ENCODE measurements at regions of chr11 and their contacts with region 1.

Region 1: DNA sequence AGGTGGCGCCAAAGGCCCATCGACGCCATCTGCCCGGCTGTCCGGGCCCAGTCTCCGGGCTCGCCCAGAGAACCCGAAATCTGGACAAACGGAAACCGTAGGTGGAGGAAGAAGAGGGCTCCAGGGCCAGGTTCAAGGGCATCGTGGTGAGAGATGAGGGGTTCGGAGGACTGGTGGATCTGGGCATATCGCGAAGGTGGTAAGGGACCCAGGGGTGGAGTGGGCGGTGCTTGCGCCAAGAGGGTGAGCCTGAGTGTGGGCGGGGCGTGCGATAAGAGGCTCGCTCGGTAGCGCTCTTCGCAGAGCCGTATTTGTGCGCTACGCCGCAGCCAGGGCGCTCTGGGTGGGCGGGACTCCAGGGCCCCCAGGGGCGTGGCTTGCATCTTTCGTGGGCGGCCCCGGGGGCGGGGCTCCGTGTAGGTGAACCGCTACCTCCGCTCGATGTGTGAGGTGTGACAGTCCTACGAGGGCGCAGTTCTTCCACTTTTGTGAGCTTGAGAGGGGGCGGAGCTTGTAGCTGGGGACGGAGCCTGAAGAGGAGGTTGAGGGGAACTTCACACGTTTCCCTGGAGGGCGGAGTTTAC is 4.8 kb downstream of the CD248 start:
- DNase-seq: peak; percentile 98
- ATAC-seq: peak; percentile 79
- H3K4me3 Mint-ChIP-seq: peak overlapping the region; percentile 93
- H3K27ac Mint-ChIP-seq: peak overlapping the region; percentile 97
- H3K4me1 Mint-ChIP-seq: peaks cover 30% of the 10 kb centered on the region
- H3K27me3 Mint-ChIP-seq: no peaks in the 10 kb centered on the region
- CTCF ChIP-seq: peak; percentile 95

Region 2: DNA sequence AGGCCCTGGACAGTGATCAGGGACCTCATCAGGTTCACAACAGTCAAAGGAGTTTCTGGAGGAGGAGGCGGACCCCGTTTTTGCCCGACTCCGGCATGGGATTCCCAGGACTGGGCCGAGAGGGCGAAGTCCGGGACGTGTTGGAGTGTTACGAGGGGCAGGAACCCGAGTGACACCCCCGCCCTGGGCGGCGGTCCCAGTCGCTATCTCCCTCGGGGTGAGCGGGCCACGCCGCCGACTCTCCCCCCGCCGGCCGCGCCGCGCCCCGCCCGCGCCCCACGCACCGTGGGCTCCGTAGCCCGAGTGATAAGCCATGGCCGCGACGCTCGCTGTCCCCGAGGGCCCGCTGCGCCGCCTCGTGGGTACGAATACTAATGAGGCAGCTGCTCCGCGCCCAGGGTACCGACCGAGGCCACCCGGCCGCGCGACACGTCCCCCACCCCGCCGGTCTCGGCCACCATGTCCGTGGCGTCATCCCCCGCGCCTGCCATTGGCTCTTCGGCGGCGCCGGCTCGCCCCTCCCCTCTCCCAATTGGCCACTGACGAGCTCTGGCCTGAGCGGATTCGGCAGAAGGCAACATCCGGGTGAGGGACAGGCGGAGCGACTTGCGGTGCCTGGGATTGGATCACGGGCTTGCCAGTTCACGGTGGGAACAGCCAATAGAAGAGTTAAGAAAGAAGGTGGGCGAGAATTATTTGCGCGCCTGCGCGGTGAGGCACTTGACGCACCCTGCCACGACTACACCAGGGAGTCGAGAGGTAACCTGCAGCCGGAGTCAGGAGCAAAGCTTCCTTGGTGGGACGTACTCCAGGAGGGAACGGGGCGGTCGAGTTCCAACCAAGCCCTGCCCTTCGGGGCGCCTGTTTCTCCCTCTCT is 23.1 kb before region 1 on chr11 and contains the start of gene YIF1A:
- CTCF ChIA-PET with region 1: interaction called, 10 read pairs
- POLR2A ChIA-PET with region 1: interaction called, 26 read pairs
- intact Hi-C with region 1: loop called (anchors 1 kb)
- DNase-seq: peak; percentile 93
- ATAC-seq: peak; percentile 95
- H3K4me3 Mint-ChIP-seq: peak within 1 kb of the TSS; percentile 89
- H3K27ac Mint-ChIP-seq: peak within 1 kb of the TSS; percentile 90
- H3K4me1 Mint-ChIP-seq: peaks cover 31% of the 10 kb centered on the region
- H3K27me3 Mint-ChIP-seq: peaks cover 17% of the 10 kb centered on the region
- CTCF ChIP-seq: no peak
- total RNA-seq, gene YIF1A: 53.4 and 62.6 TPM in 2 replicates

Region 3: GRCh38 chr11:66336234-66337102 is 24.4 kb after region 1 on chr11 and contains the start of gene RIN1:
- CTCF ChIA-PET with region 1: interaction called, 67 read pairs
- POLR2A ChIA-PET with region 1: interaction called, 9 read pairs
- intact Hi-C with region 1: no loop called
- DNase-seq: no peak
- ATAC-seq: peak; percentile 78
- H3K4me3 Mint-ChIP-seq: peak within 1 kb of the TSS; percentile 78
- H3K27ac Mint-ChIP-seq: peak within 1 kb of the TSS; percentile 50
- H3K4me1 Mint-ChIP-seq: peaks cover 22% of the 10 kb centered on the region
- H3K27me3 Mint-ChIP-seq: peaks cover 6% of the 10 kb centered on the region
- CTCF ChIP-seq: no peak
- total RNA-seq, gene RIN1: 0.76 and 0.98 TPM in 2 replicates

Region 4: GRCh38 chr11:66371627-66372415 is 59.8 kb after region 1 on chr11 and contains the start of gene SLC29A2:
- CTCF ChIA-PET with region 1: no interaction called
- POLR2A ChIA-PET with region 1: interaction called, 24 read pairs
- intact Hi-C with region 1: loop called (anchors 1 kb)
- DNase-seq: peak; percentile 78
- ATAC-seq: peak; percentile 87
- H3K4me3 Mint-ChIP-seq: peak within 1 kb of the TSS; percentile 90
- H3K27ac Mint-ChIP-seq: peak within 1 kb of the TSS; percentile 94
- H3K4me1 Mint-ChIP-seq: peaks cover 15% of the 10 kb centered on the region
- H3K27me3 Mint-ChIP-seq: no peaks in the 10 kb centered on the region
- CTCF ChIP-seq: no peak
- total RNA-seq, gene SLC29A2: 13.5 and 17.1 TPM in 2 replicates

Region 5: GRCh38 chr11:66438504-66439466 is 126.7 kb after region 1 on chr11 and contains the start of gene MRPL11:
- CTCF ChIA-PET with region 1: interaction called, 13 read pairs
- POLR2A ChIA-PET with region 1: interaction called, 3 read pairs
- intact Hi-C with region 1: loop called (anchors 1 kb)
- DNase-seq: peak; percentile 78
- ATAC-seq: peak; percentile 98
- H3K4me3 Mint-ChIP-seq: peak within 1 kb of the TSS; percentile 87
- H3K27ac Mint-ChIP-seq: peak within 1 kb of the TSS; percentile 97
- H3K4me1 Mint-ChIP-seq: peaks cover 8% of the 10 kb centered on the region
- H3K27me3 Mint-ChIP-seq: peaks cover 4% of the 10 kb centered on the region
- CTCF ChIP-seq: no peak
- total RNA-seq, gene MRPL11: 62.6 and 74.3 TPM in 2 replicates

Region 6: DNA sequence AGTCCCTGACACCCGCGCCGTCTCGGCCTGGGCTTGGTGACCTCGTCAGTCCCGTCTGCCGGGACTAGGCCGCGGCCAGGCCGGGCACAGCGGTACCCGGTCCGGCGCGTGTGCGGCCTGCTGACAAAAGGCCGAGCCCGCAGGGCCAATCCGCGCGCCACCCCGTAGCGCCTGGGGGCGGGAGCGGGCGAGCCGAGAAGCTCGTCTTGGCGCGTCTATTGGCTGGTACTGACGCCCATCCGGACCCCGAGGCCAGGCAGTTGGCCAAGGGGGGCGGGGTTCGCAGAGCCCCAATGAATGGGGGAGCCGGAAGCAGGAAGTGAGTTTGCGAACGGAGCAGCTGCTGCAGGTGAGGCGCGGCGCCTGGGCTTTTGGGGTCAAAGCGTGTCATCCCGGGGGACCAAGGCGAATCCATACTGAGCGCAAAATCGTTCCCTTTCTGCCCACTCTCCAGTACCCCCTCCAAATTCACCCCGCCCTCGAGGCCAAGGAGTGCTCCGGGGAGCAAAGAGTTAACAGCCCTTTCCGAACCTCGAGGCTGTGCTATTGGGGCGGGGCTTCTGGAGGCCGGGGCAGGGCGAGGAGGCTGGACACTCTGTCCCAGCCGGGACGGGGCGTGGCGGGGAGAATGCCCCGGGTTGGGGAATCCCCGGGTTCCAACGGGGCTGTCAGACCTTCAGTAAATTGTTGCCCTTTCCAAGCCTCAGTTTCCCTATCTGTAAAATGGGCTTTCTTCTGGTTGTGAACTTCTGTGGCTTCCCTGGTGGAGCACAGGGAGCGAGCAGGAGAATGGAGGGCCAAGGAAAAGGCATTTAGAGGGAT is 168.3 kb after region 1 on chr11 and contains the start of gene DPP3:
- CTCF ChIA-PET with region 1: interaction called, 7 read pairs
- POLR2A ChIA-PET with region 1: interaction called, 6 read pairs
- intact Hi-C with region 1: loop called (anchors 1 kb)
- DNase-seq: peak; percentile 91
- ATAC-seq: peak; percentile 98
- H3K4me3 Mint-ChIP-seq: peak within 1 kb of the TSS; percentile 90
- H3K27ac Mint-ChIP-seq: peak within 1 kb of the TSS; percentile 87
- H3K4me1 Mint-ChIP-seq: peaks cover 22% of the 10 kb centered on the region
- H3K27me3 Mint-ChIP-seq: no peaks in the 10 kb centered on the region
- CTCF ChIP-seq: no peak
- total RNA-seq, gene DPP3: 62.2 and 63.3 TPM in 2 replicates

Region 7: DNA sequence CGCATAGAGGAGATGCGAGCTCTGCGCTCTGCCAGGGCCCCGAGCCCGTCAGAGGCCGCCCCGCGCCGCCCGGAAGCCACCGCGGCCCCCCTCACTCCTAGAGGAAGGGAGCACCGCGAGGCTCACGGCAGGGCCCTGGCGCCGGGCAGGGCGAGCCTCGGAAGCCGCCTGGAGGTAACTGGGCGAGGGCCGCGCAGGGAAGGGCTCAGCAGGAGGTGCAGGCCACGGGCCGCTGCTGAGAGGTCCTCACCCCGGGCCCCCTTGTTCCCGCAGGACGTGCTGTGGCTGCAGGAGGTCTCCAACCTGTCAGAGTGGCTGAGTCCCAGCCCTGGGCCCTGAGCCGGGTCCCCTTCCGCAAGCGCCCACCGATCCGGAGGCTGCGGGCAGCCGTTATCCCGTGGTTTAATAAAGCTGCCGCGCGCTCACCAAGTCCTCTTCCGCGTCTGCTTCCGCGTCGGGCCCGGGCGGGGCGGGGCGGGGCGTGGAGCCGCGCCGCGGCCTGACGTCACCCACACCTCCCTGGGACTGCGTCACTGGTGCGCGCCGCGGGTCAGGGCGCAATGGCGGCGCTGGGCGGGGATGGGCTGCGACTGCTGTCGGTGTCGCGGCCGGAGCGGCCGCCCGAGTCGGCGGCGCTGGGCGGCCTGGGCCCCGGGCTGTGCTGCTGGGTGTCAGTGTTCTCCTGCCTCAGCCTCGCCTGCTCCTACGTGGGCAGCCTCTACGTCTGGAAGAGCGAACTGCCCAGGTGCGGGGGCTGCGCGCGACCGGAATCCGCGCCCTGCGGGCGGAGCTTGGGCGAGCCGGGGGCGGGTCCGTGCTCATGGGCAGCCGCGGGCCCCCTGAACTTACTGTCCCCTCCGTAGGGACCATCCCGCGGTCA is 531.1 kb after region 1 on chr11 and contains the start of gene RCE1:
- CTCF ChIA-PET with region 1: no interaction called
- POLR2A ChIA-PET with region 1: interaction called, 7 read pairs
- intact Hi-C with region 1: loop called (anchors 1 kb)
- DNase-seq: peak; percentile 93
- ATAC-seq: peak; percentile 91
- H3K4me3 Mint-ChIP-seq: peak within 1 kb of the TSS; percentile 92
- H3K27ac Mint-ChIP-seq: peak within 1 kb of the TSS; percentile 90
- H3K4me1 Mint-ChIP-seq: peaks cover 45% of the 10 kb centered on the region
- H3K27me3 Mint-ChIP-seq: no peaks in the 10 kb centered on the region
- CTCF ChIP-seq: no peak
- total RNA-seq, gene RCE1: 20.1 and 21.4 TPM in 2 replicates

Measured in activated B cell treated with CpG ODN at 0.5 μM for 24 hours (primary cell).